Activated CD4-positive, alpha-beta memory T cell treated with anti-CD3 and anti-CD28 coated beads, Interleukin-2, amount 10 ng/mL, durations not matched to agents 7 days and 5 days (primary cell): ENCODE measurements at regions of chr1 and their contacts with region 1.

Region 1: GRCh38 chr1:160681067-160681890 is 30.3 kb downstream of the CD48 start:
- DNase-seq: peak; percentile 90
- H3K4me3 Mint-ChIP-seq: no peak overlapping the region
- H3K27ac Mint-ChIP-seq: peak overlapping the region; percentile 96
- H3K4me1 Mint-ChIP-seq: peaks cover 79% of the 10 kb centered on the region
- H3K27me3 Mint-ChIP-seq: no peaks in the 10 kb centered on the region

Region 2: GRCh38 chr1:160494620-160495019 is 186.7 kb before region 1 on chr1:
- CTCF ChIA-PET with region 1: no interaction called
- POLR2A ChIA-PET with region 1: no interaction called
- DNase-seq: no peak
- H3K4me3 Mint-ChIP-seq: no peak overlapping the region
- H3K27ac Mint-ChIP-seq: no peak overlapping the region
- H3K4me1 Mint-ChIP-seq: no peaks in the 10 kb centered on the region
- H3K27me3 Mint-ChIP-seq: no peaks in the 10 kb centered on the region

Region 3: GRCh38 chr1:160629286-160630210 is 51.7 kb before region 1 on chr1:
- CTCF ChIA-PET with region 1: interaction called, 14 read pairs
- POLR2A ChIA-PET with region 1: interaction called, 41 read pairs
- DNase-seq: peak; percentile 81
- H3K4me3 Mint-ChIP-seq: peak overlapping the region; percentile 62
- H3K27ac Mint-ChIP-seq: peak overlapping the region; percentile 99
- H3K4me1 Mint-ChIP-seq: peaks cover 96% of the 10 kb centered on the region
- H3K27me3 Mint-ChIP-seq: no peaks in the 10 kb centered on the region

Region 4: DNA sequence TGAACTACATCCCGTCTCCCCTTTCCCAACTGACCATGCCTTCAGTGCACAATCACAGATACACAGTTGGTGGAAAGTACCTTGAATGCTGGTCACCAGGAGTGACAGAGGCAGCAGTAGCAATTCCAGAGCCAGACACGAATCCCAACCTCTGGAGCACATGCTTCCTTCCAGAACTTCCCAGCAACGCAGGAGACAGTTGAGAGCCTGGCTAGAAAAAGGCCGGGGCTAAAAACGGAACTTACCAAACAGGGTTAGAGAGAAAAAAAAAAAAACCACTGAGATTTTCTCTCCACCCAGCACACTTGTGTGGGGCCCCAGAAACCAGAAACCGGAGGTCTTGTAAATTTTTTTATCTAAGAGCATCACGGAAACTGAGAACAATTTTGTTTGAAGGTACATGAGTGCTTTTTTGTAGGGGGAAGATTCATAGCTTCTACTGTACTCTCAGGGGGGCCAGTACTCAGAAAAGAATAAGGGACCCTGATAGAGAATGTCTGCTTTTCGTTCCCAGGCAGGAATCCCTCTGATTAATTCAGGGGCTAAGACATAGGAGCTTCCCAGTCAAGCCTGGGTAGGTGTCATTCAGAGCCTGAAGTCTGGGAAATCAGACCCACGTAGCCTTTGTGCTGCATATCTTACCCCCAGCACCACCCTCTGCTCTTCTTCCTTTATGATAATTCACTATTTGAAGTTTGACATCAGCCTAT is 30.5 kb after region 1 on chr1 and contains the start of gene CD48:
- CTCF ChIA-PET with region 1: interaction called, 63 read pairs
- POLR2A ChIA-PET with region 1: interaction called, 106 read pairs
- DNase-seq: peak; percentile 61
- H3K4me3 Mint-ChIP-seq: no peak within 1 kb of the TSS
- H3K27ac Mint-ChIP-seq: no peak within 1 kb of the TSS
- H3K4me1 Mint-ChIP-seq: peaks cover 20% of the 10 kb centered on the region
- H3K27me3 Mint-ChIP-seq: no peaks in the 10 kb centered on the region
- total RNA-seq, gene CD48: 403 to 404 TPM

Region 5: GRCh38 chr1:160777486-160778089 is 96.3 kb after region 1 on chr1:
- CTCF ChIA-PET with region 1: interaction called, 21 read pairs
- POLR2A ChIA-PET with region 1: interaction called, 3 read pairs
- DNase-seq: peak; percentile 56
- H3K4me3 Mint-ChIP-seq: no peak overlapping the region
- H3K27ac Mint-ChIP-seq: no peak overlapping the region
- H3K4me1 Mint-ChIP-seq: peaks cover 37% of the 10 kb centered on the region
- H3K27me3 Mint-ChIP-seq: no peaks in the 10 kb centered on the region

Region 6: GRCh38 chr1:160951443-160952128 is 270.3 kb after region 1 on chr1:
- CTCF ChIA-PET with region 1: interaction called, 15 read pairs
- POLR2A ChIA-PET with region 1: interaction called, 4 read pairs
- DNase-seq: peak; percentile 81
- H3K4me3 Mint-ChIP-seq: no peak overlapping the region
- H3K27ac Mint-ChIP-seq: no peak overlapping the region
- H3K4me1 Mint-ChIP-seq: peaks cover 7% of the 10 kb centered on the region
- H3K27me3 Mint-ChIP-seq: no peaks in the 10 kb centered on the region